Transverse colon (tissue), 4 donors: ENCODE measurements at regions of chr6 and their contacts with region 1.

Region 1: DNA sequence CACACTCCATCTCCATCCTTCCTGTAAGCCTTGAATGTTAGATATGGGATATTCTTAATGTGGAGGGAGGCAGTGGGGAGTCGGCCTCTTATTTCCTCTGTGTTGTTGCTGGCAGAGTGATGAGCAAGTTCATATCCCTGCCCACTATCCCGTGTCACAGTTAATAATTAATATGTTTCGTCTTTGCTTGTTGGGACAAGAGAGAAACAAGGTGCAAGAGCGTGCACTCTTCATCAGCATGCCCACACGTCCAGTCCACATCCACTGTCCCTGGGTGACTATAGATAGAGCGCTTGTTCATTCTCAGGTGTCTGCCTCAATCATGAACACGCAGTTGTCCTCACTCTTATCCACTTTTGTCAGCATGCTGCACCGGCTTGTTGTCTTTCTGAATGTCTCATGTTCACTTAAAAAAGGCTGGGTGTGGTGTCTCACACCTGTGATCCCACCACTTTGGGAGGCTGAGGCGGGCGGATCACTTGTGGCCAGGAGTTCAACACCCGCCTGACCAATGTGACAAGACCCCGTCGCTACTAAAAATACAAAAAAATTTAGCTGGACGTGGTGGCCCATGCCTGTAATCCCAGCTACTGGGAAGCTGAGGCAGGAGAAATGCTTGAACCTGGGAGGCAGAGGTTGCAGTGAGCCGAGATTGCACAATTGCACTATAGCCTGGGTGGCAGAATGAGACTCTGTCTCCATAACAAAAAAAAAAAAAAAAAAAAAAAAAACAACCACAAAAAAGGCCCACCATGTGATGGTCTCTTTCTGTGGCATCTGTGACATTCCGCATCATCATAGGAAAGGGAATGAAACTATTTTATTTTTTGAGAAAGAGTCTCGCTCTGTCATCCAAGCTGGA is 34.2 kb downstream of the PPP1R3G start:
- DNase-seq: no peak
- H3K4me3 ChIP-seq: no peak overlapping the region
- H3K27ac ChIP-seq: no peak overlapping the region
- H3K4me1 ChIP-seq: no peaks in the 10 kb centered on the region
- H3K27me3 ChIP-seq: no peaks in the 10 kb centered on the region
- CTCF ChIP-seq: no peak
- EP300 ChIP-seq: no peak
- POLR2A ChIP-seq: no peak

Region 2: GRCh38 chr6:4102687-4103244 is 1016.6 kb before region 1 on chr6:
- in situ Hi-C with region 1: no loop called
- intact Hi-C with region 1: no loop called
- DNase-seq: no peak
- H3K4me3 ChIP-seq: no peak overlapping the region
- H3K27ac ChIP-seq: peak overlapping the region in 3 of 4 donors; percentile 14 to 46 (median 29)
- H3K4me1 ChIP-seq: peaks cover 0 to 17% (median 5%) of the 10 kb centered on the region in 4 donors
- H3K27me3 ChIP-seq: no peaks in the 10 kb centered on the region
- CTCF ChIP-seq: no peak
- EP300 ChIP-seq: no peak
- POLR2A ChIP-seq: no peak

Region 3: DNA sequence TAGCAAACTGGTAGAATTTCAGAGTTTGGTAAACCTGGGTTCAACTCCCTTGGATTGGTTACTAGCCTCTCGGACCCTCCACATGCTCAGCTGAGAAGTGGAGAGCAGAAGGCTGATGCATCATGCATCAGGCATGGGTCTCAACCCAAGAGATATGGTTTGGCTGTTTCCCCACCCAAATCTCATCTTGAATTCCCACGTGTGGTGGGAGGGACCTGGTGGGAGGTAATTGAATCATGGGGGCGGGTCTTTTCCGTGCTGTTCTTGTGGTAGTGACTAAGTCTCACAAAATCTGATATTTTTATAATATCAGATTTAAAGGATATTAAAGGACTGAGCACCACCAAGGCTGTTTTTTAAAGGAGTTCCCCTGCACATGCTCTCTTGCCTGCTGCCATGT is 40.9 kb after region 1 on chr6:
- in situ Hi-C with region 1: no loop called
- intact Hi-C with region 1: loop called (anchors 1 kb)
- DNase-seq: no peak
- H3K4me3 ChIP-seq: no peak overlapping the region
- H3K27ac ChIP-seq: no peak overlapping the region
- H3K4me1 ChIP-seq: no peaks in the 10 kb centered on the region
- H3K27me3 ChIP-seq: no peaks in the 10 kb centered on the region
- CTCF ChIP-seq: no peak
- EP300 ChIP-seq: no peak
- POLR2A ChIP-seq: no peak